ENCODE measurements at regions of chr1 and their contacts with region 1.

Region 1: DNA sequence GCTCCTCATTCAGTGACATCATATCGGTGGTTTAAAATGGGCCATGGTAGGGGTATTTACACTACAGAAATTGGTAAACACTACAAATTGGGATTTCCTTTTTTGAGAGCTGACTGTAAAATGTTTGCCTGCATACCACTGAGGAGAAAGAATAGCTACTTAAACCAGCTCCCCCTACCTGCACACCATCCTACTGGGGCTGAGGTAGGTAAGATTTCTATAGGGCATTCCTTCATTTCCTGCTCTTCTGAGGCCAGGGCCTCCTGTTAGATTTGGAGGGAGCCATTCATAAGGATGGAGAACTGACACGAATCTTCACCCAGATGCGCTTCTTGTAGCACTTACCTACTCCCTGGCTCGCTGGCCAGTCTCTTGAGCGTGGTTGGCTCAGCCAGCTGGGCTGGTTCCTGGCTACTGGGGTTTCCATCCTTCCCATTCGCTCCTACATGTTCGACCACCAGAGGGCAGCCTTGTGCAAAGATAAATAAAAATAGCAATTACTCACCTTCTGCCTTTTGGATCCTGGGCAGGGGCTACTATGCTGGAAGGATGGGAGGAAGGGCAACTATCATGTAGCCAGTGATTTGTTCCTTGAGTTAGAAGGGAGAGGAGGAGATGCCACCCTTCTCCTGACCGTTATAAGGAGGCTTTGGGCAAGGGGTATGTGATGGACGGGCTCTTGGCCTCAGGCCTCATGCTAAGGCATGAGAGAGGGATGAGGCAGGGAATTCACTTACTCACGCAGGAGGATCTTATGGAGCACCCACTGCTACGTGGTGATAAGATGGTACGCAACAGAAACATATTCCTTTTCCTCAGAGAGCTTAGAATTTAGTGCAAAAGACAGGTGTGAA is 10.7 kb downstream of the OPTC start:
- DNase-seq: peak; percentile 87
- ATAC-seq: peak; percentile 32 to 47

Region 2: DNA sequence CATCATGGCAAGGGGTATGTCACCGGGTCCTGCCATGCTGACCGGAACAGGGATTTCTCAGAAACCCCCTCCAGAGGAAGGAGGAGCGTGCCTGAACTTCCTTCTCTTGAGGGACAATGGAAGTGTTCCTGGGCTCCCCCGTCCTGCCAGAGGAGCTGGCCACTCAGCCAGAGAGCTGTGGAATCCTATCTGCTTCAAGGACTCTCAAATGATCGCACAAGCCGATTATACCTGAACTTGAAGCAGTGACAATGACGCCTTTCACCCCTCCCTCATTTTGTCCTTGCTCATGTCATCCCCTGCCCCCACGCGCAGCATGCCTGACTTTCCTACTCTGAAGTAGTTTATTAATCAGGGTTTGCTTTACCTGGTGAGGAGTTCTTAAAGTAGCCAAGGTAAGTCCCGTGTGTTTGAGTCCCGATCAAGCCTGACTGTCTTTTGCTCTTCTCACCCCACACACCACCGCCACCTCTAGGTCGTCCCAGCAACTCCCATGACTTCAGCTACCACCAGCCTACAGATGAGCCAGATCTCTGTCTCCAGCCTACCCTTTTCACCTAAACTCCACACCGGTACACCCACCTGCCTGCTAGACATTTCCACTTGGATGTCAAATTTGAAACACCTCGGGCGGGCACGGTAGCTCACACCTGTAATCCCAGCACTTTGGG is 54.0 kb before region 1 on chr1:
- intact Hi-C with region 1: no loop called
- DNase-seq: no peak
- ATAC-seq: no peak

Region 3: GRCh38 chr1:203558064-203558760 is 53.6 kb after region 1 on chr1:
- intact Hi-C with region 1: loop called in 1 of 2 experiments (anchors 2 kb)
- DNase-seq: peak; percentile 69
- ATAC-seq: peak; percentile 69 to 78

Region 4: GRCh38 chr1:203615061-203615581 is 110.5 kb after region 1 on chr1:
- intact Hi-C with region 1: loop called (anchors 5 kb)
- DNase-seq: no peak
- ATAC-seq: no peak

Region 5: GRCh38 chr1:203625628-203626019 is 121.0 kb after region 1 on chr1:
- intact Hi-C with region 1: loop called in 1 of 2 experiments (anchors 5 kb)
- DNase-seq: no peak
- ATAC-seq: peak; percentile 23 to 42

Region 6: DNA sequence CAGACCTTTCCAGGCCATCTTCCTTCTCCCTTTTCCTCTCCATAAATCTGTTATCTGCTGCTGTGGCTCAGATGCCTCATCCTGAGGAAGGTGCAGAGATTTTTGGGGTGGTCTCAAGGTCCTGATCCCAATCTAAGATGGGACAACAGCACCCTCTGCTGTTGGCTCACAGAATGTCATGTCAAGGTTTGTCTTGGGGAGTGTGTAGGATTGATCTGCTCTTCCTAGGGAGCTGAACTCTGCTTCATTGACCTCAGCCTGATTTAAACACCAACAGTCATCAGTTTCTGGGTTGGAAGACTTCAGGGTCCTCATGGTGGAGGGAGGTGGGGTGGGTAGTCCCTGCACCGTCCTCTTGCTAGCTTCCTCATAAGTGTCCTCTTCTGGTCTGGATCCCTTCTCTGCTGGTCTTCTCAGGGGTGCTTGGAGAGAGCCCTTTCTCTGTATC is 197.5 kb after region 1 on chr1:
- intact Hi-C with region 1: loop called (anchors 2 to 5 kb)
- DNase-seq: peak; percentile 33
- ATAC-seq: peak; percentile 58 to 65

Region 7: DNA sequence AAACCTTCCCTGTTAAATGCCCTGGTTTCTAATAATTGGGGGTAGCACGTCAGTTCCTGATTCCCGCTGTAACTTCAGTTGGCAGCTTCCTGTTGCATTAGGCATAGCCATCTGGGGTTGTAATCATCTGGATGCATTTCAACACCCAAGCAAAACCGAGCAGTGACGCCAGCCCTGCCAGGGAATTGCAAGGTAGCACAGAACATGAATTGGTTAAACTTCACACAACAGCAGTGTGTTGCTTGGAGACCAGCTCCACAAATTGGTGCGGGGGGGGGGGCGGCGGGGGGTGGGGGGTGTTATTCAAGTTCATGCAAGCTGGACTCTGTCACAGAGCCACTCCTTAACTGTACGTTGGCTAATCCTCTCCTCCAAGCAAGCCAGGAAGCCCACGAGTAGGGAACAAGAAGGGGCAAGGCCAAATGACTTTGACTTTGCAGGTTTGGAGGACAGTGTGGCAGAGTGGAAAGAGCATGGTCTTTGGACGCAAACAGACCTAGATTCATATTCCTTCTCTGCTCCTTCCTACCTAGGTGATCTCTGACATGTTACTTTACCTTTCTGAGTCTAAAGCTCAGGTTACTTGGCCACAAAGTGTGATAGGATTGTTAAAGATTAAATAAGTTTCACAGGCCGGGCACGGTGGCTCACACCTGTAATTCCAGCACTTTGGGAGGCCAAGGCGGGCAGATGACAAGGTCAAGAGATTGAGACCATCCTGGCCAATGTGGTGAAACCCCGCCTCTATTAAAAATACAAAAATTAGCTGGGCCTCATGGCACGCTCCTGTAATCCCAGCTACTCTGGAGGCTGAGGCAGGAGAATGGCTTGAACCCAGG is 265.1 kb after region 1 on chr1:
- intact Hi-C with region 1: loop called in 1 of 2 experiments (anchors 10 kb)
- DNase-seq: peak; percentile 81
- ATAC-seq: peak; percentile 85 to 90